ENCODE measurements at regions of chr10 and their contacts with region 1.

Region 1: GRCh38 chr10:132458593-132459300 is 61.7 kb downstream of the PWWP2B start:
- DNase-seq: peak; percentile 84 to 89 (median 87)
- ATAC-seq: peak; percentile 78
- H3K4me3 ChIP-seq: no peak overlapping the region
- H3K4me1 ChIP-seq: peaks cover 59% of the 10 kb centered on the region
- CTCF ChIP-seq: peak; percentile 97

Region 2: GRCh38 chr10:132536971-132537712 is 78.4 kb after region 1 on chr10:
- intact Hi-C with region 1: loop called in 1 of 2 experiments (anchors 10 kb)
- DNase-seq: peak; percentile 100
- ATAC-seq: peak; percentile 94
- H3K4me3 ChIP-seq: peak overlapping the region; percentile 38
- H3K4me1 ChIP-seq: peaks cover 31% of the 10 kb centered on the region
- CTCF ChIP-seq: peak; percentile 20

Region 3: GRCh38 chr10:132637477-132638129 is 178.9 kb after region 1 on chr10:
- intact Hi-C with region 1: loop called (anchors 2 to 5 kb)
- DNase-seq: peak in 2 of 3 donors; percentile 20 to 40
- ATAC-seq: peak; percentile 54
- H3K4me3 ChIP-seq: no peak overlapping the region
- H3K4me1 ChIP-seq: peaks cover 16% of the 10 kb centered on the region
- CTCF ChIP-seq: peak; percentile 35

Measured in mucosa of descending colon (tissue), 3 donors.